Mammary epithelial cell (primary cell): ENCODE measurements at regions of chr12 and their contacts with region 1.

Region 1: DNA sequence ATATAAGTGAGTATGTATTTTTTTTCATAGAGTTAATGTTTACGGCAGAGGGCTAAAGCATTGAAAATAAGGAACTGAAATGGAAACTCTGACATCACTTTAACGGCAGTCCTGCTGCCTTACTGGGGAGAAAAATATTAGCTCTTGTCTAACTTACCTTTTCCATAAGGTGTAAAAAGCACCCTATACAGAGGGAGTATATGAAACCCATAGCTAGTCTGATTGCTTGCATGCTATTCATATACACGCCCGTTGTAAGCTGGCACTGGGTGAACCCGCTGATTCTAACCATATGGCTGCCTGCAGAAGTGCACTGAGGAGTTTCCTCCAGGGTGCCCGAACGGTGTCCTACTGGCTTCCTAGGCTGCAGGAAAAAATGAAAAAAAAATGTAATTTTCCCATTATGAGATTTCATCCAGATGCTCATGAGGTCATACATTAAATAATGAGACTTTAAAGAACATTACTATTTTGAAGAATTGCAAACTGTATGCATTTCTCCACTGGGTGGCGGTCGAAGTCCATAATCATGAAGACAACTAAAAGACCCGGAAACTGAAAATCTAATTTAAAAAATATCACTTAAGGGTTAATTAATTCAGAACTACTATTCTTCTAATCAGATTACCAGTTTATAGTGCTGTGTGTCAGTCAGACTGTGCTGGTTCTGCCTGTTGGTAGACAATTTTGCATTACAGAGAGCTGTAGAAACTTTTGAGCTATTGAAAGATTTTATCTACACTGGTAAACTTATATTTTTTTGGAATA is 144.7 kb downstream of the ALX1 start:
- DNase-seq: no peak
- H3K4me3 ChIP-seq: no peak overlapping the region
- H3K27ac ChIP-seq: no peak overlapping the region
- H3K4me1 ChIP-seq: no peaks in the 10 kb centered on the region
- H3K27me3 ChIP-seq: peaks cover 3% of the 10 kb centered on the region
- CTCF ChIP-seq: peak; percentile 53 to 55

Region 2: GRCh38 chr12:85076688-85077430 is 347.9 kb before region 1 on chr12:
- CTCF ChIA-PET with region 1: interaction called, 3 read pairs
- dilution Hi-C with region 1: no loop called
- in situ Hi-C with region 1: no loop called
- intact Hi-C with region 1: loop called (anchors 5 kb)
- DNase-seq: peak; percentile 89
- H3K4me3 ChIP-seq: no peak overlapping the region
- H3K27ac ChIP-seq: no peak overlapping the region
- H3K4me1 ChIP-seq: no peaks in the 10 kb centered on the region
- H3K27me3 ChIP-seq: no peaks in the 10 kb centered on the region
- CTCF ChIP-seq: peak; percentile 34 to 62

Region 3: GRCh38 chr12:85155787-85156186 is 269.0 kb before region 1 on chr12:
- CTCF ChIA-PET with region 1: no interaction called
- dilution Hi-C with region 1: no loop called
- in situ Hi-C with region 1: no loop called
- intact Hi-C with region 1: loop called (anchors 10 kb)
- DNase-seq: no peak
- H3K4me3 ChIP-seq: no peak overlapping the region
- H3K27ac ChIP-seq: no peak overlapping the region
- H3K4me1 ChIP-seq: no peaks in the 10 kb centered on the region
- H3K27me3 ChIP-seq: no peaks in the 10 kb centered on the region
- CTCF ChIP-seq: peak in 1 of 2 donors; percentile 21

Region 4: GRCh38 chr12:85405781-85406522 is 18.8 kb before region 1 on chr12:
- CTCF ChIA-PET with region 1: no interaction called
- dilution Hi-C with region 1: no loop called
- in situ Hi-C with region 1: no loop called
- intact Hi-C with region 1: no loop called
- DNase-seq: no peak
- H3K4me3 ChIP-seq: no peak overlapping the region
- H3K27ac ChIP-seq: no peak overlapping the region
- H3K4me1 ChIP-seq: no peaks in the 10 kb centered on the region
- H3K27me3 ChIP-seq: no peaks in the 10 kb centered on the region
- CTCF ChIP-seq: no peak

Region 5: GRCh38 chr12:85626001-85626781 is 201.4 kb after region 1 on chr12:
- CTCF ChIA-PET with region 1: no interaction called
- dilution Hi-C with region 1: no loop called
- in situ Hi-C with region 1: no loop called
- intact Hi-C with region 1: no loop called
- DNase-seq: peak; percentile 79
- H3K4me3 ChIP-seq: no peak overlapping the region
- H3K27ac ChIP-seq: peak overlapping the region; percentile 20
- H3K4me1 ChIP-seq: peaks cover 21% of the 10 kb centered on the region
- H3K27me3 ChIP-seq: no peaks in the 10 kb centered on the region
- CTCF ChIP-seq: no peak

Region 6: GRCh38 chr12:85713373-85713772 is 288.6 kb after region 1 on chr12:
- CTCF ChIA-PET with region 1: no interaction called
- dilution Hi-C with region 1: no loop called
- in situ Hi-C with region 1: no loop called
- intact Hi-C with region 1: no loop called
- DNase-seq: no peak
- H3K4me3 ChIP-seq: no peak overlapping the region
- H3K27ac ChIP-seq: no peak overlapping the region
- H3K4me1 ChIP-seq: no peaks in the 10 kb centered on the region
- H3K27me3 ChIP-seq: no peaks in the 10 kb centered on the region
- CTCF ChIP-seq: no peak